ENCODE measurements at regions of chr5 and their contacts with region 1.

Region 1: DNA sequence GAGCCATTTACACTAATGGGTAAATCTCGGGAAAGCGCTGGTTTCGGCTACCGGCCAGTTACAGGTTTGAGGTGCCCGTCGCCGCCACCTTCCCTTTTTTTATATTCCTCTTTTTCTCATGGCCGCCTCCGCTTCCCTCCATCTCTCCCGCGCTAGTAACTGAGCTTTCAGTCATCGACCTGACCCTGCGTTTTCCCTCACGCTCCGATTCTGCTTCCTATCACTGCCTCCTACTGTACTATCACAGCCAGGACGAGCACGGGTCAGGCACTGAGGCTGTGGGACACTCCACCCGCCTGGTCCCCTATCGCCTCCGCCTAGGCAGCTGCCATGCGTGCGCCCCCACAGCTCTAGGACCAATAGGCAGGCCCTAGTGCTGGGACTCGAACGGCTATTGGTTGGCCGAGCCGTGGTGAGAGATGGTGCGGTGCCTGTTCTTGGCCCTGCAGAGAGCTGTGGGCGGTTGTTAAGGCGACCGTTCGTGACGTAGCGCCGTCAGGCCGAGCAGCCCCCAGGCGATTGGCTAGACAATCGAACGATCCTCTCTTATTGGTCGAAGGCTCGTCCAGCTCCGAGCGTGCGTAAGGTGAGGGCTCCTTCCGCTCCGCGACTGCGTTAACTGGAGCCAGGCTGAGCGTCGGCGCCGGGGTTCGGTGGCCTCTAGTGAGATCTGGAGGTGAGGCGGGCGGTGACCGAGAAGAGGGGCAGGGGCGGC is at the start of gene HMGCR:
- DNase-seq: peak; percentile 99
- ATAC-seq: peak; percentile 99
- H3K4me3 ChIP-seq: peak within 1 kb of the TSS; percentile 75 to 99
- H3K27ac ChIP-seq: peak within 1 kb of the TSS in 1 of 2 donors; percentile 82
- H3K4me1 ChIP-seq: no peaks in the 10 kb centered on the region
- H3K27me3 ChIP-seq: no peaks in the 10 kb centered on the region
- total RNA-seq, gene HMGCR: 17.8 to 36.1 TPM

Region 2: DNA sequence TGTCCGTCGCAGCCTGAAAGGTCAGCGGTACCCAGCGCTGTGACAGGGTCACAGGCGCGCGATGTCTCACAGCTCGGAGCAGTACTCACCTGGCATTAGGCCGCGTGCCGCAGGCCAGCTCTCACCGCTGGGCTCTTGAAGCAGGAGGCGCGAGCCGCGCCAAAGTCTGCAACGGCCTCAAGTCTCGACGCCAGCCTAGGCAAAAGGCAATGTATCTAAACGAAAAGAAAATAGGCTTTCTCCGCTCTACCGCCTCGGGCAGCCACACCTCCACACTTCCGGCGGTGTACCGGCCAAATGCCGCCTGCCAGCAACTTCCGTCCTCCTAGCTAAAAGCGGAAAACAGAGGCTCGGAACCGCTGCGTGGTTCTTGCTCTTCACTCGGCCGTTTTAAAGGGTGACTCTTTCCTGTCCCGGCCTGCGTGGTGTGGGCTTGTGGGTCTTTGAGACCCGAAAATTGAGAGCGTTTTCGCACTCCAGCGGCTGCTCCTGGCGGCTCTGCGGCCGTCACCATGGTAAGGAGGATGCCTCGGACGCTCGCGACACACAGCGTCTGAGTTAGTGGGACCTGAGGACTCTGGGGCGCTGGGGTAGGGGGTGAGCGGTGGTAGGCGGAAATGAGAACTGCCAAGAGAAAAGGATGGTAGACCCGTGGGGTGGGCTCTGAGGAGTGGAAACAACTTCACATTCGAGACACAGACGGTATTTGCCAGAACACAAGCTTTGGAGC is 569.8 kb before region 1 on chr5 and contains the starts of genes GFM2 and NSA2:
- intact Hi-C with region 1: loop called (anchors 5 to 10 kb)
- DNase-seq: peak; percentile 94 to 96
- ATAC-seq: peak; percentile 99
- H3K4me3 ChIP-seq: peak within 1 kb of the TSS; percentile 73 to 99
- H3K27ac ChIP-seq: peak within 1 kb of the TSS in 1 of 2 donors; percentile 43
- H3K4me1 ChIP-seq: no peaks in the 10 kb centered on the region
- H3K27me3 ChIP-seq: no peaks in the 10 kb centered on the region
- total RNA-seq, gene GFM2: 18.2 to 18.6 TPM
- total RNA-seq, gene NSA2: 50.9 to 57.9 TPM

Region 3: DNA sequence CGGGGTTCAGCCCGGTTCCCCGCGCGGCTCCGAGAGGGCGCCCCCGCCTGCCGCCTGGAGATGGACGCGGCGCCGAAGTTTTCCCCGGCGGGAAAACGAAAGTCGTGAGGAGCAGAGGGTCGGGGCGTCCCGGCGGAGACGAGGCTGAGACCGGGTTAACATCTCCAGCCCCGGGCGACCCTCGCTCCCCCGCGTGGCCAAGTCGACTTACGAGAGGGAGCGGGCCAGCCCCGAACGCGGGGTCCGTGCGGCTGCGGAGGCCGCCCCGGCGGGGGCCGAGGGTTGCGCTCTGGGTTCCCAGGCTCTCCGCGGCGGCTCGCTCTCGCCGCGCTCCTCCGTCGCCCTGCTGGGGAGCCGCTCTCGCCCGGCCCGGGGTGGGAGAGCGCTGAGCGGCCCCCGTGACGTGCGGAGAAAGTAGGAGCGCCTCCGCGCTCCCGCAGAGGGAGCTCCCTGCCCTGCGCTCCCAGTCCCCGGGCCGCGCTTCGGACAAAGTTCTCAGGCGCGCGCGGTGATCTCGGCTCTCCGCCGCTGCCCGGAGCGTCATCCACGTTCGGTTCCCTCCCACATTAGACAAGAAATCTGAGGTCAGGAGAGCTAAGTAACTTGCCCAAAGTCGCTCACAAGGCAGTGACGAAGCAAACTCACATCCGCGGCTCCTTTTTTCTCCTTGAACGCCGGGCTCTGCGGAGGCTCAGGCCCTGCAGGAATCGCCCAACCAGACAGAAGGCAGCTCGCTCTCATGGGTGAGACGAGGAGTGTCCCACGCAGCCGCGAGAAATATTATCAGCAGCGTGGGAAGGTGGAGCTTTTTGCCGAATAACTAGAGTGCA is 283.3 kb before region 1 on chr5:
- intact Hi-C with region 1: loop called in 1 of 2 experiments (anchors 5 kb)
- DNase-seq: peak; percentile 65 to 84
- ATAC-seq: peak; percentile 81
- H3K4me3 ChIP-seq: peak overlapping the region; percentile 91 to 95
- H3K27ac ChIP-seq: peak overlapping the region; percentile 88 to 96
- H3K4me1 ChIP-seq: no peaks in the 10 kb centered on the region
- H3K27me3 ChIP-seq: no peaks in the 10 kb centered on the region

Region 4: GRCh38 chr5:75236322-75237316 is 100.2 kb before region 1 on chr5 and contains the start of gene ANKRD31:
- intact Hi-C with region 1: loop called (anchors 2 to 5 kb)
- DNase-seq: peak; percentile 91 to 95
- ATAC-seq: peak; percentile 100
- H3K4me3 ChIP-seq: peak within 1 kb of the TSS; percentile 50 to 98
- H3K27ac ChIP-seq: peak within 1 kb of the TSS in 1 of 2 donors; percentile 82
- H3K4me1 ChIP-seq: no peaks in the 10 kb centered on the region
- H3K27me3 ChIP-seq: no peaks in the 10 kb centered on the region
- total RNA-seq, gene ANKRD31: 0.16 to 0.24 TPM

Region 5: DNA sequence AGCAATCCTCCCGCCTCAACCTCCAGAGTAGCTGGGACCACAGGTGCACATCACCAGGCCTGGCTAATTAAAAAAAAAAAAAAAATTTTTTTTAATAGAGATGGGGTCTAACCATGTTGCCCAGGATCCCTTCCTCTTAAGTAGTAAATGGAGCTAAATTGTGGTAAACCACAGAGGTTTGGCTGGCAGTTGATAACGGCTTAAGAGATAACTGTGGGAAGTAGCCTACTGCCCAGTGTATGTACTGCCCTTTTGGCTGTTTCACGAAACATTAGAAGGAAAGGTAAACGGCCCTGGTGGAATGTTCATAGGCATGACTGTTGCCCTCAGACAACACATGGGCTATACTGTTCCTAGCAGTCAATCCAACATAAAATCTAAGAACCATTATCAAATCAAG is 44.7 kb after region 1 on chr5:
- intact Hi-C with region 1: no loop called
- DNase-seq: no peak
- ATAC-seq: no peak
- H3K4me3 ChIP-seq: no peak overlapping the region
- H3K27ac ChIP-seq: no peak overlapping the region
- H3K4me1 ChIP-seq: no peaks in the 10 kb centered on the region
- H3K27me3 ChIP-seq: no peaks in the 10 kb centered on the region

Region 6: DNA sequence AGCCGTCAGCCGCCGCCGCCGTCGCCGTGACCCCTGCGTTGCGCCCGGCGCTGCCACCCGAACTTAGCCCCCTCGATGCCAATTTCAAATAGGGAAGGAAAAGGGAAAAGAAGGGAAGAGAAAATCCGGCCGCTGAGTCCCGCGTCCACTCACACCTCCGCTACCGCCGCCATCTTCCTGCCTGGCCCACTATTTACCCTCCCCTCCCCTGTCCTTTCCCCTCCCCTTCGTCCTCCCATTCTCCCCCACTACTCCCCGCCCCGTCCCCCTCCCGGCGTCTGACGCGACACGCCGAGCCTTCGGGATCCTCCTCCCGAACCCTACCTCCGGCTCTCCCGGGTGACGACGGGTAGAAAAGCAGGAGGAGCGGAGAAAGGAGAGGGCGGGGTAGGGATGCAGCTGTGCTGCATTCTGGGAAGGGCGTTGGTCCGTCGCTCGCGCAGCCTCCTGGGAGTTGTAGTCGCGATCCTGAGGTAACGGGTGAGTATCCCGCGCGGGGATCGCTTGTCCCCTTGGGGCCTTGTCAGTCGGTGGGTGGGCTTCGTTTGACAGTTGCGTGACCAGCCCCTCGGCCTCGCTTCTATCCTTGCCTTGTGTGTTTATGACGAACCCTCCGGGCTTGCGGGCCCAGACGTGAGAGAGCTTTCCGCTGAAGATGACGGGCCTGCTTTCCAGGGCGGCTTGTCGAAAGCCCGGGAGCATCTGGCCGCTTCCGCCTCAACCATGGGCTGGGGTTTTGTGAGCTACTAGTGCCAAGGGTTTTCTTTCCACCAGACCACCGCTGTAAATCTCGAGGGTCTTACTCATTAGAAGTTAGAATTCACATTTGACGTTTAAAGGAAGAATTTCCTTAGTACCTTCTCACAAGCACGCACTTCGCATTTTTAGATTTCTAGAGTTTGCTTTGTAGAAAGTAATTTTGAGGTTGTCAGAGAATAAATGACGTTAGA is 174.9 kb after region 1 on chr5 and contains the starts of genes CERT1 and POLK:
- intact Hi-C with region 1: loop called (anchors 2 to 5 kb)
- DNase-seq: peak; percentile 99
- ATAC-seq: peak; percentile 98
- H3K4me3 ChIP-seq: peak within 1 kb of the TSS; percentile 67 to 73
- H3K27ac ChIP-seq: peak within 1 kb of the TSS; percentile 29 to 73
- H3K4me1 ChIP-seq: peaks cover 0 to 5% of the 10 kb centered on the region in 2 donors
- H3K27me3 ChIP-seq: no peaks in the 10 kb centered on the region
- total RNA-seq, gene CERT1: 33.2 to 41.7 TPM
- total RNA-seq, gene POLK: 45.1 to 58.4 TPM

Region 7: GRCh38 chr5:75536147-75537025 is 199.6 kb after region 1 on chr5:
- intact Hi-C with region 1: no loop called
- DNase-seq: peak in 1 of 2 donors; percentile 61
- ATAC-seq: peak; percentile 38
- H3K4me3 ChIP-seq: no peak overlapping the region
- H3K27ac ChIP-seq: no peak overlapping the region
- H3K4me1 ChIP-seq: no peaks in the 10 kb centered on the region
- H3K27me3 ChIP-seq: no peaks in the 10 kb centered on the region

Region 8: DNA sequence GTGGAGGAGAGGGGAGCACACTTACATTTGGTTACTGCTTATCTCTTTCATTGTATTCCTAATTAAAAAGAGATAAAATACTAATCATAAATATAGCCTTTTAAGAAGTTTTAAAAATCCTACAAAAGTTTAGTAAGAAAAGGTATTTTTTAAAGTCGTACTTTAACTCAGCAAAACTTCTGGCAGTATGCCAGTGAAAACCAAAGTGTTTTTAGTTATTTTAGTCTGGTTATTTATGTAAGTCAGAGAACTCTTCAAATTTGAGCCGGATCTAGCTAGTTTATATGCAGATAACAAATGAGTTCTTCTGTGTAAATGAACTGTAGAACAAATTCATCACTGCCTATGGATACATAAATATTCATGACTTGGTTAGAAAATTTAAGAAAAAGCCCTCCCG is 238.0 kb after region 1 on chr5:
- intact Hi-C with region 1: loop called in 1 of 2 experiments (anchors 10 kb)
- DNase-seq: no peak
- ATAC-seq: no peak
- H3K4me3 ChIP-seq: no peak overlapping the region
- H3K27ac ChIP-seq: peak overlapping the region; percentile 22 to 63
- H3K4me1 ChIP-seq: peaks cover 2 to 4% of the 10 kb centered on the region in 2 donors
- H3K27me3 ChIP-seq: no peaks in the 10 kb centered on the region